HEK293 (cell line): ENCODE measurements at regions of chr6 and their contacts with region 1.

Region 1: GRCh38 chr6:82006027-82006738 is 241.4 kb downstream of the IBTK start:
- H3K4me3 ChIP-seq: no peak overlapping the region
- H3K27ac ChIP-seq: no peak overlapping the region
- H3K4me1 ChIP-seq: no peaks in the 10 kb centered on the region
- CTCF ChIP-seq: peak; percentile 54; the same call in 1 of the 2 replicates

Region 2: GRCh38 chr6:82017288-82017687 is 11.1 kb after region 1 on chr6:
- CTCF ChIA-PET with region 1: interaction called, 10 read pairs
- POLR2A ChIA-PET with region 1: no interaction called
- H3K4me3 ChIP-seq: no peak overlapping the region
- H3K27ac ChIP-seq: no peak overlapping the region
- H3K4me1 ChIP-seq: no peaks in the 10 kb centered on the region
- CTCF ChIP-seq: no peak